ENCODE measurements at regions of chr5 and their contacts with region 1.

Region 1: GRCh38 chr5:132293066-132293991 is 865 bp upstream of the SLC22A4 start:
- DNase-seq: peak; percentile 87 to 93
- ATAC-seq: peak; percentile 78 to 87 (median 84)
- H3K4me3 ChIP-seq: peak overlapping the region; percentile 18 to 83 (median 70)
- H3K27ac ChIP-seq: peak overlapping the region; percentile 83 to 100 (median 98)
- H3K4me1 ChIP-seq: peaks cover 5 to 39% (median 35%) of the 10 kb centered on the region in 9 donors
- H3K27me3 ChIP-seq: no peaks in the 10 kb centered on the region
- CTCF ChIP-seq: peak in 3 of 9 donors; percentile 33 to 40 (median 40)

Region 2: DNA sequence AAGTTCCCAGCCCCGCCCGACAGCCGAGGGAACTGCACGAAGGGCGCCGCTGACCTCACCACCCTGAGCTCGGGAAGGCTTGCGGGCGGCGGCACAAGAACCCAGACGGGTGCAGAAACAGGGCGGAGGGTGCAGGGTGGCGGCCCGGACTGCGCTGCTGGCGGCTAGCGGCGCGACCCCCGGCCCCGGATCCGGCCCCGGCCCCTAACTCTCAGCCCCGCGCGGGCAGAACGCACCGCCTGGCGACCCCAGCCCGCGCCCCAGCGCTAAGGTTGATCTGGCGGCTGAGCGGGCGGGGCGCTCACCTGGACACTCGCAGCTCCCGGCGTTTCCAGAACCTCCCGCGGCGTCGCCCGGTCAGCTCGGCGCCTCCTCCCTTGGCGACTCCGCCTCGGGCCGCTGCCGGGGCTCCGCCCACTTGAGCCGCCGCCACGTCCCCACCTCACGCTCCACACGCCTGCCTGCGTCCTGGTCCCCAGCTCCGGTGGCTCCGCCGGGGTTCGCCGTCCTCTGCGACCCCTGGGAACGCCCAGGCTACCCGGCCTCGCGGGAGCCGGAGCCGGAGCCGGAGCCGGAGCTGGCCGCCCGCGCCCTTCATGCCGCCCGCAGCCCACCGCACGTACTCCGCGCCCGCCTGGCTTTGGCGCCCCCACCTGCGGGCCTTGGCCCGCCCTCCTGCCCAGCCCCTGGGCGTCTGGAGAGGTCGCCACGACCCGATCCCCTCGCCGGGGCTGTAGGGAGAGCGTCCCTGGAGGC is 65.7 kb before region 1 on chr5 and contains the start of gene P4HA2:
- intact Hi-C with region 1: loop called in 2 of 10 experiments (anchors 5 kb)
- DNase-seq: peak; percentile 80 to 87
- ATAC-seq: peak; percentile 79 to 92 (median 88)
- H3K4me3 ChIP-seq: peak within 1 kb of the TSS; percentile 59 to 98 (median 88)
- H3K27ac ChIP-seq: peak within 1 kb of the TSS; percentile 77 to 99 (median 94)
- H3K4me1 ChIP-seq: peaks cover 29 to 62% (median 44%) of the 10 kb centered on the region in 9 donors
- H3K27me3 ChIP-seq: peaks cover 0 to 16% (median 0%) of the 10 kb centered on the region in 7 donors
- CTCF ChIP-seq: peak in 4 of 9 donors; percentile 2 to 40 (median 23)
- total RNA-seq, gene P4HA2: 35.0 to 77.1 (median 52.4) TPM

Region 3: GRCh38 chr5:132363431-132364112 is 70.2 kb after region 1 on chr5:
- intact Hi-C with region 1: loop called in 4 of 10 experiments (anchors 2 to 5 kb)
- DNase-seq: peak in 1 of 2 donors; percentile 69
- ATAC-seq: peak; percentile 68 to 94 (median 85)
- H3K4me3 ChIP-seq: no peak overlapping the region
- H3K27ac ChIP-seq: peak overlapping the region; percentile 38 to 86 (median 78)
- H3K4me1 ChIP-seq: peaks cover 4 to 41% (median 22%) of the 10 kb centered on the region in 9 donors
- H3K27me3 ChIP-seq: no peaks in the 10 kb centered on the region
- CTCF ChIP-seq: no peak

Region 4: GRCh38 chr5:132369474-132370180 is 76.3 kb after region 1 on chr5 and contains the start of gene SLC22A5:
- intact Hi-C with region 1: loop called in 5 of 10 experiments (anchors 2 to 5 kb)
- DNase-seq: peak in 1 of 2 donors; percentile 73
- ATAC-seq: peak; percentile 81 to 87 (median 86)
- H3K4me3 ChIP-seq: peak within 1 kb of the TSS; percentile 51 to 82 (median 72)
- H3K27ac ChIP-seq: peak within 1 kb of the TSS; percentile 70 to 92 (median 90)
- H3K4me1 ChIP-seq: peaks cover 3 to 55% (median 21%) of the 10 kb centered on the region in 9 donors
- H3K27me3 ChIP-seq: no peaks in the 10 kb centered on the region
- CTCF ChIP-seq: no peak
- total RNA-seq, gene SLC22A5: 10.3 to 36.8 (median 12.5) TPM

Measured in heart right ventricle (tissue), 16 donors.